Panc1 (cell line): ENCODE measurements at regions of chr15 and their contacts with region 1.

Region 1: DNA sequence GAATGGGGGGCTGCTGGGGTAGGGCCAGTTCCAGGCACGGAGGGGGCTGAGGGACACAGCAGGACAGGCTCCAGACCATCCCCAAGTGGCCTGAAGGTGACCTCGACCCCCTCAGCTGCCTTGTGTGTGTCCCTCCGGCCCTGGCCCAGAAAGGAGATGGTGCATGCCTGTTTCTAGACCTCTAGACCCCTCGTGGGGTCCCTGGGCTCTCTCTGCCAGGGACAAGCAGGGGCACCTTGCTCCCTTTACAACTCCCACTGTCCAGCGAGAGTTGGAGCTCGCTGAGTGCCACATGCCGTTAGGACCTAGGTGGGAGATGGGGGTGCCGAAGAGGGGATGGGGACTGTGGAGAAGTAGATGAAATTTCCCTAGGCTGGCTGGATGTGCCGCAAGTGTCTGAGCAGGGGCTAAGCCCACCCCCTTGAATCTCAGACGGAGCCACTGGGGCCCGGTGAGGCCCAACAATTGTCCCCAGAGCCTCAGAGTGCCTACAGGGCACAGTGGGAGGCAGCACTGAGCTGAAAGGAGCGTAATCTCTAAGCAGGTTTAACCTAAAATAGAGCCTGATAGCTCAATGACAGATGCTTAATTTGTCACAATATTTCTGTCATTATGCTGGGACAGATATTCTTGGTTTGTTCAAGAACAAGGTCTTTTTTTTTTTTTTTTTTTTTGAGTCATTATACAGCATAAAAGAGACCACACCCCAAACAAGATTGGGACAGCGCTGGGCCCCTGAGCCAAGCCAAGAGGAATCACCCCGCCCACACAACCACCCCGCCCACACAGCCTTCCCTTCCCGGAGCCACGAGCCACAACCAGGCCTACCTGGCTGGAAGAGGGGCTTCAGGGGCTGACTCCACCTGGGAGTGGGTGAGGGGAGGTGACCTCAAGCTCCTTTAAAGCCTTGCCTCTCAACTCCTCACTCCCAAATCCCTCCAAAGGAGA is 23.6 kb upstream of the KLF13 start:
- DNase-seq: no peak
- ATAC-seq: no peak
- H3K4me3 ChIP-seq: no peak overlapping the region
- H3K27ac ChIP-seq: peak overlapping the region; percentile 44; the same call in 1 of the 2 replicates
- H3K4me1 ChIP-seq: peaks cover 7% of the 10 kb centered on the region
- H3K27me3 ChIP-seq: no peaks in the 10 kb centered on the region
- CTCF ChIP-seq: no peak

Region 2: DNA sequence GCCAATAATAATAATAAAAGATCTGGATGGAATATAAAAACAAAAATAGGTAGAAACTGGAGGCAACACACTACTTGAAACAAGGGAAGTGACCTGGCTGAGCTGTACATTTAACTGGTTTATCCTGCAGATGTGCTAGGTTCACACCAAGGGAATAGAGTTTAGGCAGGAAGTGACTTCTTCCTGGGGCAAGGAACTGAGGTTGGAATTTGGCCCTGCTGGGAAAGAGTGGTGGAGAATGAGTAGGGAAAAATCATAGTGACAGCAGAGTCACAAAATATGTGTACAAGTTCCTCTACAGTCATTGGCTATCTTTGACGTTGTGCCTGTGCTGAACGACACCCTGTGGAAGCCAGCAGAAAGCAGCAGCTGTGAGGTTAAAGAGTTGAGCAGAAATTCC is 633.0 kb before region 1 on chr15:
- CTCF ChIA-PET with region 1: interaction called, 12 read pairs
- POLR2A ChIA-PET with region 1: no interaction called
- in situ Hi-C with region 1: no loop called
- intact Hi-C with region 1: no loop called
- DNase-seq: no peak
- ATAC-seq: no peak
- H3K4me3 ChIP-seq: no peak overlapping the region
- H3K27ac ChIP-seq: no peak overlapping the region
- H3K4me1 ChIP-seq: no peaks in the 10 kb centered on the region
- H3K27me3 ChIP-seq: no peaks in the 10 kb centered on the region
- CTCF ChIP-seq: no peak

Region 3: GRCh38 chr15:31156226-31156625 is 146.8 kb before region 1 on chr15:
- CTCF ChIA-PET with region 1: no interaction called
- POLR2A ChIA-PET with region 1: interaction called, 12 read pairs
- in situ Hi-C with region 1: no loop called
- intact Hi-C with region 1: no loop called
- DNase-seq: no peak
- ATAC-seq: no peak
- H3K4me3 ChIP-seq: no peak overlapping the region
- H3K27ac ChIP-seq: no peak overlapping the region
- H3K4me1 ChIP-seq: no peaks in the 10 kb centered on the region
- H3K27me3 ChIP-seq: no peaks in the 10 kb centered on the region
- CTCF ChIP-seq: no peak

Region 4: DNA sequence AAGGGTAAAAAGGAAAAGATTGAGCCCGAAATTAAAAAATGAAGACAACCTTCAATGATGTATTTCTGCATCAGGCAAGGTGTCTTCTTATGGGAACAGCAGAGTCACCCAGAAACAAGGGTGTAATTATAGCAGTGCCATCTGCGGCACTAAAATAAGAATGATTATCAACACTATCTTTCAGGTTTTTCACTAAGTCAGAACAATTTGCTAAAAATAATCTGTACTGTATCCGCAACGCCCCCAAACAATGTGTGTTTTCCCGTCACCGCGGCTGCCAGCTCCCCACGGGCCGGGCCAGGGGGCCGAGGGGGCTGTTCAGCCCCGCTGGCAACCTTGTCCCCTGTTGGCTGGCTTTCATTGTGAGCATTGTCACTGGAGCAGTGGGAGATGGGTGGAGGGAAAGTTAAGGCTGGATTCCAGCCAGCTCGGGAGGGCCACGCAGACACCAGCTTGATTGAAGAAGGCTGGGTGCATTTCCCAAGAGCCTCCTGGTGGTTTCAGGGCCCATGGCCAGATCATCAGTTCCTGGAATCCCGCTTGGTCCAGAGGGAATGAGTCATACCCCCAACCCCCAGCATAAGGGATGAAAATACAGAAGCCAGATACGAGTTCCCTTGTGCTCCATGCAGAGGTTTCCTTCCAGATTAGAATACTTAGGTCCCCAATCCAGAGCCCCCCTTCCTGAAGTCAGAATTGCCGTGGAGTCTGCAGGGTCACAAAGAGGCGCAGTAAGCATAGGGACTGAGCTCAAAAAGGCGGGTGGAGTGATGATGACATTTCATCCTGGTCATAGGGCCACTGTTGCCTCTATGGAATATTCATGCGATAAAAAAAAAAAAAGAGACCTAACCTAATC is 66.6 kb before region 1 on chr15:
- CTCF ChIA-PET with region 1: interaction called, 11 read pairs
- POLR2A ChIA-PET with region 1: no interaction called
- in situ Hi-C with region 1: no loop called
- intact Hi-C with region 1: no loop called
- DNase-seq: no peak
- ATAC-seq: peak; percentile 70
- H3K4me3 ChIP-seq: no peak overlapping the region
- H3K27ac ChIP-seq: no peak overlapping the region
- H3K4me1 ChIP-seq: peaks cover 5% of the 10 kb centered on the region
- H3K27me3 ChIP-seq: no peaks in the 10 kb centered on the region
- CTCF ChIP-seq: no peak

Region 5: GRCh38 chr15:31419820-31420219 is 116.8 kb after region 1 on chr15:
- CTCF ChIA-PET with region 1: interaction called, 10 read pairs
- POLR2A ChIA-PET with region 1: no interaction called
- in situ Hi-C with region 1: no loop called
- intact Hi-C with region 1: no loop called
- DNase-seq: no peak
- ATAC-seq: no peak
- H3K4me3 ChIP-seq: no peak overlapping the region
- H3K27ac ChIP-seq: no peak overlapping the region
- H3K4me1 ChIP-seq: no peaks in the 10 kb centered on the region
- H3K27me3 ChIP-seq: no peaks in the 10 kb centered on the region
- CTCF ChIP-seq: no peak

Region 6: GRCh38 chr15:31435261-31435911 is 132.3 kb after region 1 on chr15:
- CTCF ChIA-PET with region 1: interaction called, 12 read pairs
- POLR2A ChIA-PET with region 1: no interaction called
- in situ Hi-C with region 1: no loop called
- intact Hi-C with region 1: no loop called
- DNase-seq: no peak
- ATAC-seq: peak; percentile 87
- H3K4me3 ChIP-seq: peak overlapping the region in 1 of 2 experiments; percentile 34; a peak in 2 of 4 replicates
- H3K27ac ChIP-seq: peak overlapping the region; percentile 51; the same call in 1 of the 2 replicates
- H3K4me1 ChIP-seq: 0 out of 2 replicates have a peak, but pooled peaks cover 3% of the 10 kb centered on the region
- H3K27me3 ChIP-seq: no peaks in the 10 kb centered on the region
- CTCF ChIP-seq: peak; percentile 90